Cardiac septum (tissue), 1 donor: ENCODE measurements at regions of chr3 and their contacts with region 1.

Region 1: GRCh38 chr3:16516695-16517481 is 3.4 kb upstream of the RFTN1 start:
- DNase-seq: no peak

Region 2: DNA sequence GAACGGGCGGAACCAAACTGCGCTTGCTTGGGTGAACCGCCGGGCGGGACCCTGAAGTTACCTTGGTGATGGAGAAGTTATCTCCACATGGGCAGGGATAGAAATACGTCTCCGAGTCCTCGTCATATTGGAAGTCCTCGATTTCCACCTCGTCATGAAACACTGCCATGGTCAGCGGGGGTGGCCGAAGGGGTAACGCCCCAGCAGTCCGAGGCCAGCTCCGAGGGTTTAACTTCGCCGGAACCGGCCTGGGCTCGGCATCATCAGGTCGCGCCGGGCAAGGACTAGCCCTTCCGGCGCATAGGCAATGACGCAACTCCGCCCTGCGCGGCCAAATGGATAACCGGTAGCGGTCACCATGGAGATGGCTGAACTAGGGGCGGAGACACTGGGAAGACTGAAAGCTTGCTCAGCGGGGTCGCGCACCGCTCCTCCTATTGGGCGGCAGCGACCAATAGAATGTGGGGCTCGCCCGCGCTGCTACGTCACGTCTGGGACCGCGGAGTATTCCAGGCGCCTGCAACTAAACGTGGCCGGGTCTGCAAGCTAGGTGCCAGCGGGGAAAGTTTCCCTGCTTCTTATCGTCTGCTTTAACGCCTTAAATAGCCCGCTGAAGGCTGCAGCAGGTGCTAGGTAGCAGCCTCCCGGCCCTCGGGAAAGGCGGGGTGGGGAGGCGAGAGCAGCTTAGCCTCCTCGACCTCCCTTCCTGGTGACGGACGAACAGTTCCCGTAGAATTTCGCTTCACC is 252.0 kb before region 1 on chr3 and contains the starts of genes DPH3 and OXNAD1:
- intact Hi-C with region 1: loop called (anchors 5 kb)
- DNase-seq: peak; percentile 99
- total RNA-seq, gene DPH3: 23.1 TPM
- total RNA-seq, gene OXNAD1: 15.1 TPM

Region 3: DNA sequence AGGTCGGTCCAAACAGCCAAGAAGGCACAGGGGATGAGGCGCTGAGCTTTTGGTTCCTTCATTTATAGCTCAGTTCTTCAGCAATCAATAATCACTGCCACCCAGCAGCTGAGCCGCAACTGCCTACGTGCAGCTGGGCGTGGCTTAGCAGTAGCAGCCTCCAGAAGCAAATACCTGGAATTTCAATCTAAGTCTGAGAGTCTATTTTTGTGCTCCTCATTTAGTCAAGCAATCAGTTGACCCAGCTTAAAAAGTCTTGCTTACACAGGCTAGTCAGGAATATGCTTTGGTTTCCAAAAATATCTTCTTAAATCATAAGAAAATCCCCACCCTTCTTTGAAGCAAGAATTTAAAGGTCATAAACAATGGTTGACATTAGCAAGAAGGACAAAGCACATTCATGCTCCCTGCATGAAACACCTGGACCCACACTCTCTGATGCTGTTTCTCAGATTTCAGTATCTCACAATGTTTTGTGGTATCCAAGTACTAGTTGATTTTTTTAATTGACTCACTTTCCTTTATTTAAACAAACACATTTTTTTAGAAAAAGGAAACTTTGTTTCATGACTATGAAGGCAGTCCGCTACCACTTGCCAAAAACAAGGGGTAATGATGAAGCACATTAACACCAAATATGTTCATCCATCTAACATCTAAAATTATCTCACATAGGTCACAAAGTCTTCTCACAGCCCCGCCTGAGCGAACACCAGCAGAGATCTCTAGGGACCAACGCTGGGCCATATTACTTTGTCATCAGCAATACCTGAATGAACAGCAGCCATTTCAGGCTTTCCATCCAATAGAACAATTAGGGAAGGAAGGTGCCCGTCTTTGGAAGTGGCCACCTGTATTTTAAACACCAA is 145.8 kb before region 1 on chr3:
- intact Hi-C with region 1: loop called (anchors 5 kb)
- DNase-seq: no peak

Region 4: DNA sequence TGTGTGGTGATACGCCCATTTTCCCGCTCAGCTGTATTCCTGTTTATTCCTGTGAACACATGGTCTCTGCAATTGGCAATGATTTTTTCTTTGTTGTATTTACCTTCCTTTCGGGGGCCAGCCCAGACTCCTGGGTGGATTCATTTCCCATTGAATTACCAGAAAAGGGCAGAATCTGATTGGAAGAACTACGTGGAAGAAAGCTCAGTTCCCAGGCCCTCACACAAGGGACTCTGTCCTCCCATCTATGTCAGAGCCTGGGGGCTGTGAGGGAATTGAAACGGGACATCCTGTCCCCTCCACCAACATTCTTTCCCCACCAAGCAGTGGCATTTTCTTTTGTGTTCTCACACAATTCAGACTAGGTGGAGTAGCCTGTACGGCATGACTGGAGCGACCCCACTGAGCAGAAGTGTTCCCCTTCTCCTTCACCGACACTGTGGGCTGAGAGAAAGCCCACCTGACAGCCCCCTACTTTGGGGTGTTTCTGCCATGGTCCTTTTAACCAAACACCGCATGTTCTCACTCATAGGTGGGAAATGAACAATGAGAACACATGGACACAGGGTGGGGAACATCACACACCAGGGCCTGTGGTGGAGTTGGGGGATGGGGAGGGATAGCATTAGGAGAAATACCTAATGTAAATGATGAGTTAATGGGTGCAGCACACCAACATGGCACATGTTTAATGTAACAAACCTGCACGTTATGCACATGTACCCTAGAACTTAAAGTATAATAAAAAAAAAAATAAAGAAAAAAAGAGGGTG is 28.7 kb after region 1 on chr3:
- intact Hi-C with region 1: loop called (anchors 1 kb)
- DNase-seq: no peak

Region 5: DNA sequence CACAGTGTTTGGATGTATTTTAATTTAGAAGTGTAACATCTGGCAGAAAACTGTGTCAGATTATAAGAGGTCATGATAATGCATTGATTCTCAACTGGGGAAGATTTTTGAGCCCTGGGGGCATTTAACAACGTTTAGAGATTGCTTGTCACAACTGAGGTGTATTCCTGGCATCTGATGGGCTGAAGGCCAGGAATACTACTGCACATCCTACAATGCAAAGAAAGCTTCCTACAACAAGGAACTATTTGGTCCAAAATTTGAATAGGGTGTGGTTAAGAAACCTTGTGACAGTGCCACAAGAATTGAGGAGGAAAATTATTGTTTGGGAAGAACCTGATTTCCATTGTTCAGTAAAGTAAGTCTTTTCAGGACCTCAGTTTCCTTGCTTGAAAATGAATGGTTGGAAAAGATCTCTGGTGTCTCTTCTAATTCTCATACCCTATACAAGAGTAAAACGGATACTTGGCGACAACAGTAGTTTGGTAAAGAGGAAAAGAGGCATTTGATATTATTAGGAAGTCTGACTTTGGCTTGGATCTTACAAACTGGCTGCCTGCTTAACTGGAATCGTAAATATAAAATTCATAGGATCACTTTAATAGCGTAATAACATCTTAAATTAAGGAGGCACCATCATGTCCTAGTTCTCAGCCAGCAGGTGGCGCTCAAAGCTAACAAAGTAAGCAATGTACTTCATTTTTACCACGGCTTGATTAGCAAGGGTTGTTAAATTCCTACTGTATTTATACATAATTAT is 84.1 kb after region 1 on chr3:
- intact Hi-C with region 1: no loop called
- DNase-seq: peak; percentile 85